ENCODE measurements at regions of chr19 and their contacts with region 1.

Region 1: GRCh38 chr19:35506011-35506410 is 7.4 kb downstream of the DMKN start:
- DNase-seq: no peak
- ATAC-seq: no peak
- H3K4me3 ChIP-seq: no peak overlapping the region
- H3K27ac ChIP-seq: no peak overlapping the region
- H3K4me1 ChIP-seq: 0 out of 2 replicates have a peak, but pooled peaks cover 5% of the 10 kb centered on the region
- H3K27me3 ChIP-seq: peaks cover 20% of the 10 kb centered on the region
- CTCF ChIP-seq: no peak

Region 2: DNA sequence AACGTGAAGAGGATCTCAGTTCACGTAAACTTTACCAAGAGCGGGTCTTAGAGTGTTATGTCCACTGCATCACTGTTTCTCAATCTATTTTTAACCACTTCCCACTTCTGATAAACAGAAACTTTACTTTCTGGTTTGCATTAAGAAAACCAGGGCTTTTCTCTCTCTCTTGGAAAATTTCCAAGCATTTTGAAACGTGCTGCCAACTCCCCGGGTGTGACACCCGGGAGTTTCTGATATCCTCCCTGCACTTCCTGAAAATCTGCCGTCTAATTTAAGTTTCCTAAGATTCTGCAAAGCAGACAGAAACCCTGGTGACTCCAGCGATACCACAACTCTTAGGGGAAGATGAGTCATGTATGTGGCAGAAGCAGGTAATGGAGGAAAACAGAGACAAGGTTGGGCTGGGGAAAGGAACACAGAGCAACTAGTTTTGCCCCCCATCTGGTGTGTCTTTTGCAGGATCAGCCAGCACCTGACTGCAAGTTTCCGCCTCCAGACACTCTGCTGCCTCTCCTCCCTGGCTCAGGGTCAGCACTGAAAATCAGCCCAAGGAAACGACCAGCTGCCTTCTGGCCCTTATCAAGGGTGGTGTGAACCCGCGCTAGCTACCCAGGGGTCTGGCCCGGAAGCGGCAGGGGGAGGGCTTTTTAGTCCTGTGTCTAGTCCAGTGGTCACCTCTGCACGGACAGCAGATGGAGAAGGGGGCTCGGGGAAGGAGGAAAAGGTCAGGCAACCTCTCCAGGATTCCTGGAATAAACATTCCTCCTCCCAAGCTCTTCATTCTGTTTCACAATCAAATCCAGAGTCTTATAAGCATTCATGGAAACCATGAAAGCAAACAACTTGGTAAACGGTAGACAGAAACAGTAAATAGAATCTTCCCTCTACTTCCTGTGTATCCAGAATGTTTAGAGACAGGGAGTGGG is 69.3 kb before region 1 on chr19:
- CTCF ChIA-PET with region 1: no interaction called
- POLR2A ChIA-PET with region 1: no interaction called
- in situ Hi-C with region 1: no loop called
- intact Hi-C with region 1: no loop called
- DNase-seq: no peak
- ATAC-seq: peak; percentile 36; the same call in 1 of the 2 replicates
- H3K4me3 ChIP-seq: no peak overlapping the region
- H3K27ac ChIP-seq: no peak overlapping the region
- H3K4me1 ChIP-seq: no peaks in the 10 kb centered on the region
- H3K27me3 ChIP-seq: peaks cover 16% of the 10 kb centered on the region
- CTCF ChIP-seq: no peak

Region 3: DNA sequence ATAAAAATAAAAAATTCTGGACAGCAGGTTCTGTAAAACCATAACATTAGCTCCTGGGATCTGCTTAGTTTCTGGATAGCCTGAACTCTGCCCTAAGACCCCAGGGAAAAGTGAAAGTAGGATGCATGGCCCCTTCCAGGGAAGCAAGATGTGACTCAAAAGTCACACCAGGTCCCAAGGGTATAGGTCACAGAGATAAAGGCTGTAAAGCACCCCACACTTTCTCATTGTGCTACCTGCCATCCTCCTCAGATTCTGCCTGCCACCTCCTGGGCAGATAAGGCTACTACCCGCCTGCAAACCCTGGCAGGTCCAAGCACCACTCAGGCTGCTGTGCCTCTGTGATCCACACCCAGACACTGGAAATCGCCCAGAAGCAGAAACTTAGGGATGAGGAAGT is 37.4 kb before region 1 on chr19:
- CTCF ChIA-PET with region 1: no interaction called
- POLR2A ChIA-PET with region 1: no interaction called
- in situ Hi-C with region 1: no loop called
- intact Hi-C with region 1: no loop called
- DNase-seq: peak; percentile 54
- ATAC-seq: peak; percentile 99
- H3K4me3 ChIP-seq: no peak overlapping the region
- H3K27ac ChIP-seq: no peak overlapping the region
- H3K4me1 ChIP-seq: no peaks in the 10 kb centered on the region
- H3K27me3 ChIP-seq: peaks cover 8% of the 10 kb centered on the region; the same call in 1 of the 2 replicates
- CTCF ChIP-seq: peak; percentile 84

Region 4: GRCh38 chr19:35495107-35496064 is 10.6 kb before region 1 on chr19:
- CTCF ChIA-PET with region 1: interaction called, 11 read pairs
- POLR2A ChIA-PET with region 1: no interaction called
- in situ Hi-C with region 1: no loop called
- intact Hi-C with region 1: no loop called
- DNase-seq: peak; percentile 33
- ATAC-seq: peak; percentile 95
- H3K4me3 ChIP-seq: peak overlapping the region in 1 of 2 experiments; percentile 30; a peak in 2 of 4 replicates
- H3K27ac ChIP-seq: no peak overlapping the region
- H3K4me1 ChIP-seq: no peaks in the 10 kb centered on the region
- H3K27me3 ChIP-seq: peaks cover 12% of the 10 kb centered on the region
- CTCF ChIP-seq: peak; percentile 98

Region 5: GRCh38 chr19:35889370-35890112 is 383.5 kb after region 1 on chr19:
- CTCF ChIA-PET with region 1: no interaction called
- POLR2A ChIA-PET with region 1: no interaction called
- in situ Hi-C with region 1: no loop called
- intact Hi-C with region 1: no loop called
- DNase-seq: no peak
- ATAC-seq: peak; percentile 31; the same call in 1 of the 2 replicates
- H3K4me3 ChIP-seq: no peak overlapping the region
- H3K27ac ChIP-seq: no peak overlapping the region
- H3K4me1 ChIP-seq: no peaks in the 10 kb centered on the region
- H3K27me3 ChIP-seq: no peaks in the 10 kb centered on the region
- CTCF ChIP-seq: no peak

Measured in Panc1 (cell line).